IMR-90 (cell line): ENCODE measurements at regions of chr18 and their contacts with region 1.

Region 1: DNA sequence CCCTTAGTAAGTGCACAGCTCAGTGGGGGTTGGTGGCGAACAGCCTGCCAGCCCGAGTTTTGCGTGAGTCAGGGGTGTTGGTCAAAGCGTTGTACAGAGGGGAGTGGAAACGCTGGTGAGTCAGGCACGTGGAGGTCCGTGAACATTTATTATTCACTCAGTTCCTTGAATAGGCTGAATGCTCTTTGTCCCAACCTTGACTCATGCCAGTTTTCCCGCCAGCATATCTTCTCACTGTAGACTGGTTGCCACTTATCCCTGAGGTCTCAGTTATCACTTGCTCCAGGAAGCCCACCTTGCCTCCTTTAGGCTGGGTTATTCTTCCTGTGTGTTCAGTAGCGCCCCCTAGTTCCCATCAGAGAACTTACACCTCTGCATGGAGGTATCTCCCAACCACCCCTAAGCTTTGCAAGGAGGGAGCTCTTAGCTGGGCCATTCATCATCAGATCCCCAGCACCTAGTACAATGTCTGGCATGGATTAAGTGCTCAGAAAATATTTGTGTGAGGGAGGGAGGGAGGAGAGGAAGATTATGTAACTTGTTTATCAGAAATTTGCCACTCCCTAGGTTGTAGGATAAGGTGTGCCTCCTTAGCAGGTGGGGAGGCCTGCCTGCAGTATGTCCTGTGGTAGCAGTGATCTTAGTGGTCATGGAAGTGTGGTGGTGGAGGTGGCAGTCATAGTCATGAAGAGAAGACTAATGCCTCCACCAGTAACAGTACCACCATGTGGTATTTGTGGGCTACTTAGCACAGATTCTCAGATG is 72.1 kb downstream of the CABLES1 start:
- DNase-seq: peak; percentile 68
- ATAC-seq: peak; percentile 58
- H3K4me3 ChIP-seq: no peak overlapping the region
- H3K27ac ChIP-seq: no peak overlapping the region
- H3K4me1 ChIP-seq: peaks cover 17% of the 10 kb centered on the region
- H3K27me3 ChIP-seq: no peaks in the 10 kb centered on the region
- CTCF ChIP-seq: peak; percentile 30
- POLR2A ChIP-seq: no peak
- RAD21 ChIP-seq: peak; percentile 6; the same call in 1 of the 2 replicates

Region 2: DNA sequence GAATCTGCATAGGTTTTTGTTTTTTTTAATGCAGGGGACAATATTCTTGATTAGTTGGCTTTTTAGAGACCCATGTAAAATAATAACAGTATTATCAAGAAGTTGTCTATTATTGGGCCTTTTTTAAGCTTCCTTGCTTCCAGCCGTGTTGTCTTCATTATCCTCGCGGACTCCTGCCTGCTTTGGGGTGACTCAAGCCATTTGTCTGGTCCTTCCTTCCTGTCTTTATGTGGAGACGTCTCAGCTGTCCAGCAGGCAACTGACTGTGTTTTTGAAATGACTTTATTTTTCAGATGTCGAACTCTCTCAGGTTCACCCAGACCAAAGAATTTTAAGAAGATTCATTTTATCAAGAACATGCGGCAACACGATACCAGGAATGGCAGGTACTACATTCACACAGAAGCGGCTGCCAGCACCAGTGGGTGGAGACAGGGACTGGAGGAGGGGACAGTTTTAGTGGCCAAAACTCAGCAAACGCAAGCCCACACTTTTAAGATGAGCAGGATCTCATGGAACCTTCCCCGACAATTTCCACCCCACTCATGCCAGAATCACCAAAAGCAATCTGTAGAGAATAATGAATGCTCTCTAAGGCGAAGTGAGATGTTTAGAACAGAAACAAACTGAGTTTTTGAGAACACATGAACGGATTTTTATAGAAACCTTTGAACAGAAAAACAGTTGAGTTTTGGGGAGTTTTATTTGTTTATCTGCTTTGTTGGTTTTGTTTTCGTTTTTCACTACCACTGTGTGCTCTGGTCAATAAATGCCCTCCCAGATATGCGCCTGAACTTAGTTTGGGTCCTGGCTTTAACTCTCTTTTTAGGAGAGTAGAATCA is 13.0 kb before region 1 on chr18:
- CTCF ChIA-PET with region 1: no interaction called
- POLR2A ChIA-PET with region 1: interaction called, 11 read pairs
- dilution Hi-C with region 1: no loop called
- in situ Hi-C with region 1: no loop called
- intact Hi-C with region 1: no loop called
- DNase-seq: peak; percentile 65
- ATAC-seq: peak; percentile 35; the same call in 1 of the 2 replicates
- H3K4me3 ChIP-seq: no peak overlapping the region
- H3K27ac ChIP-seq: peak overlapping the region; percentile 29; the same call in 1 of the 2 replicates
- H3K4me1 ChIP-seq: peaks cover 30% of the 10 kb centered on the region
- H3K27me3 ChIP-seq: no peaks in the 10 kb centered on the region
- CTCF ChIP-seq: no peak
- POLR2A ChIP-seq: no peak
- RAD21 ChIP-seq: no peak

Region 3: DNA sequence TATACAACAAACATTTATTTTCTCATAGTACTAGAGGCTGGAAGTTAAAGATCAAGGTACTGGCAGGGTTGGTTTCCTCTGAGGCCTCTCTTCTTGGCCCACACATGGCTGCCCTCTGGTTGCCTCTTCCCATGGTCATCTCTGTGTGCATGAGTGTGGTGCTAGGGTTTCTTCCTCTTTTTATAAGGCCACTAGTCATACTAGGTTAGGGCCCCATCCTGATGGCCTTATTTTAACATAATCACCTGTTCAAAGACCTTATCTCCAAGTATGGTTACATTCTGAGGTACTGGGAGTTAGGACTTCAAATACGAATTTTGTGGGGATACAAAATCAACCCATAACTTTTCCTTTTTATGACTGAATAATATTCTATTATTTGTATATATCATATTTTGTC is 240.9 kb after region 1 on chr18:
- CTCF ChIA-PET with region 1: no interaction called
- POLR2A ChIA-PET with region 1: no interaction called
- dilution Hi-C with region 1: no loop called
- in situ Hi-C with region 1: no loop called
- intact Hi-C with region 1: no loop called
- DNase-seq: no peak
- ATAC-seq: no peak
- H3K4me3 ChIP-seq: no peak overlapping the region
- H3K27ac ChIP-seq: no peak overlapping the region
- H3K4me1 ChIP-seq: no peaks in the 10 kb centered on the region
- H3K27me3 ChIP-seq: peaks cover 6% of the 10 kb centered on the region; the same call in 1 of the 2 replicates
- CTCF ChIP-seq: no peak
- POLR2A ChIP-seq: no peak
- RAD21 ChIP-seq: no peak